Natural killer cell (primary cell): ENCODE measurements at regions of chr11 and their contacts with region 1.

Region 1: DNA sequence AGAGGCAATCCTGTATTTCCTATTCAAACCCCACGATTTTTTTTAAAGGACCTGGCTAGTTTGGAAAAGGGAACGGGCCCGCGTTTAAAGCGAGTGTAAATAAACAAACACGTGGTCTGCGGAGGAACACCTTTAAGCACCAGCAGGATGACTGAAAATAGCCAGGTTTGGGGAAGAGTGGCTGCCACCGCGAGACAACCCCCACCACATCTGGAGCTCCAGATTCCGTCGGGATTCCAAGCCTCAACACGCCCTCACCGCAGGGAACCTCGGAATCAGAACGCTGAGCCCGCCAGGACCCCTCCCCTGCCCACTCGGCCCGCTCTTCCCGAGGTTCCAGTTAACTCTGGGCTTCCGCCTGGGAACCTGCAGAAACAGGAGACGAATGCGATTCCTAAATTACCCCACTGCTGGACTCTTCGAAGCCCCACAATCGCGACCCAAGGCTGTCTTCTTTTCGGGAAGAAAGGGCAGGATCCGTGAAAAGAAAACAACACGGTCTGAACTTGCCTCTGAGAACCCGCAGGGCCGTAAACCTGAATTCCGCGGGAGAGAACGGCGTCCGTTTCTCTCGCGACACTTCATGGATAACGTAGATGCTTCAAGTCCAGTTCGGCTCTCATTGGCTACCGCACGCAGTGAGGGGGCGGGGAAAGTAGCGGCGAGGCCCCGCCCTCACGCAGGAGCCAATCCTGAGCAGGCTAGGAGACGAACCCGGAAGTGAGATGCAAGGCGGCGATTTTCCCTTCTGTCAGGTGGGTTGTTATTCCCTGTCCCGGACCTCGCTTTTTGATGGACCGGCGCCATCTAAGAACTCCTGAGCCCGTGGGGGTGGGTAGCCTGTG is at the starts of genes ANKRD49 and MRE11:
- DNase-seq: peak; percentile 97 to 99
- ATAC-seq: peak; percentile 99 to 100 (median 99)
- H3K4me3 ChIP-seq: peak within 1 kb of the TSS; percentile 64
- H3K4me3 Mint-ChIP-seq: peak within 1 kb of the TSS; percentile 95
- H3K27ac ChIP-seq: peak within 1 kb of the TSS; percentile 75
- H3K27ac Mint-ChIP-seq: peak within 1 kb of the TSS; percentile 93 to 94
- H3K4me1 ChIP-seq: no peaks in the 10 kb centered on the region
- H3K4me1 Mint-ChIP-seq: peaks cover 33 to 34% of the 10 kb centered on the region in 2 donors
- H3K27me3 ChIP-seq: no peaks in the 10 kb centered on the region
- H3K27me3 Mint-ChIP-seq: no peaks in the 10 kb centered on the region
- CTCF ChIP-seq: no peak
- total RNA-seq, gene ANKRD49: 47.7 to 55.6 (median 52.6) TPM
- total RNA-seq, gene MRE11: 42.1 to 45.2 (median 43.8) TPM

Region 2: GRCh38 chr11:93197380-93198214 is 1295.9 kb before region 1 on chr11 and contains the start of gene SLC36A4:
- intact Hi-C with region 1: loop called (anchors 5 kb)
- DNase-seq: peak; percentile 76 to 93
- ATAC-seq: peak; percentile 88 to 96 (median 88)
- H3K4me3 ChIP-seq: peak within 1 kb of the TSS; percentile 78
- H3K4me3 Mint-ChIP-seq: peak within 1 kb of the TSS; percentile 93
- H3K27ac ChIP-seq: peak within 1 kb of the TSS; percentile 95
- H3K27ac Mint-ChIP-seq: peak within 1 kb of the TSS; percentile 91 to 95
- H3K4me1 ChIP-seq: no peaks in the 10 kb centered on the region
- H3K4me1 Mint-ChIP-seq: peaks cover 8 to 11% of the 10 kb centered on the region in 2 donors
- H3K27me3 ChIP-seq: peaks cover 5% of the 10 kb centered on the region
- H3K27me3 Mint-ChIP-seq: peaks cover 12 to 16% of the 10 kb centered on the region in 2 donors
- CTCF ChIP-seq: no peak
- total RNA-seq, gene SLC36A4: 14.2 to 17.0 (median 14.6) TPM

Region 3: GRCh38 chr11:93895106-93895862 is 598.2 kb before region 1 on chr11:
- intact Hi-C with region 1: no loop called
- DNase-seq: peak in 1 of 2 donors; percentile 60
- ATAC-seq: peak in 1 of 3 donors; percentile 49
- H3K4me3 ChIP-seq: no peak overlapping the region
- H3K4me3 Mint-ChIP-seq: no peak overlapping the region
- H3K27ac ChIP-seq: no peak overlapping the region
- H3K27ac Mint-ChIP-seq: no peak overlapping the region
- H3K4me1 ChIP-seq: no peaks in the 10 kb centered on the region
- H3K4me1 Mint-ChIP-seq: no peaks in the 10 kb centered on the region
- H3K27me3 ChIP-seq: no peaks in the 10 kb centered on the region
- H3K27me3 Mint-ChIP-seq: peaks cover 18 to 45% of the 10 kb centered on the region in 2 donors
- CTCF ChIP-seq: no peak

Region 4: GRCh38 chr11:94472916-94473799 is 20.3 kb before region 1 on chr11:
- intact Hi-C with region 1: no loop called
- DNase-seq: peak in 1 of 2 donors; percentile 58
- ATAC-seq: peak; percentile 93 to 99 (median 96)
- H3K4me3 ChIP-seq: no peak overlapping the region
- H3K4me3 Mint-ChIP-seq: peak overlapping the region; percentile 69
- H3K27ac ChIP-seq: peak overlapping the region; percentile 87
- H3K27ac Mint-ChIP-seq: peak overlapping the region; percentile 84 to 95
- H3K4me1 ChIP-seq: peaks cover 8% of the 10 kb centered on the region
- H3K4me1 Mint-ChIP-seq: peaks cover 29 to 36% of the 10 kb centered on the region in 2 donors
- H3K27me3 ChIP-seq: no peaks in the 10 kb centered on the region
- H3K27me3 Mint-ChIP-seq: no peaks in the 10 kb centered on the region
- CTCF ChIP-seq: no peak